Naive thymus-derived CD4-positive, alpha-beta T cell (primary cell): ENCODE measurements at regions of chr4 and their contacts with region 1.

Region 1: DNA sequence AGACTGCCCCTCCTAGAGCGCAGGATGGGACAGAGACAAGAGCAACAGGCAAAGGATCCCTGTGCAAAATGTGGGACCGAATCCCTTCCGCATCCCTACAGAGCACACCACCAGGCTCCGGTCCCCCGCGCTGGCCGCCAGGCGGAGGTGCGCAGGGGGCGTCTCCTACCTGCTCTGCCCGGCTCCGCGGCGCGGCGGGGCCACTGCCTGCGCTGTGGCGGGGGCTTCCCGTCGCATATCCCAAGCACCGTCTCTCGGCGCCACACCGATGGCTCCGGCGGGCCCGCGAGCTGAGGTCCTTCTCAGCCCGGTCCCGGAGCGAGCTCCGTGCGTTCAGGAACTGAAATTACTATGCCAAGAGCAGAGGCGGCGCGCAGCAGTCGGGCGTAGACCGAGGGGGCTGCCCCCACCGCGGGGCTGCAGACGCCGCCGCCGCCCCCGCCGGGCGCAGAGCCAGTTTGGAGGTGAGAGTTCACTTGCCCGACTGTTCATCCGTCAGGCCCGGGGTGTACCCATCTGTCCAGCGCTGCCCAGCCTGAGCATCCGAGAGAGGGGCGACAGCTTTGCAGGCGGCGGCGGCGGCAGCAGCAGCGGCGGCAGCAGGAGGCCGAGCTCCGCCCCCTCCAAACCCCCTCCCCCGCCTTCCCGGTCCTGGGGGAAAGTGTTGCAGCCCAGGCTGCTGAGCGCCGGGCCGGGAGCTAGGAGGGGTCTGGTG is at the start of gene GPRIN3:
- DNase-seq: peak; percentile 54 to 80 (median 66)
- ATAC-seq: peak; percentile 79
- H3K4me3 ChIP-seq: peak within 1 kb of the TSS; percentile 93
- H3K4me3 Mint-ChIP-seq: peak within 1 kb of the TSS; percentile 80 to 99 (median 94)
- H3K27ac ChIP-seq: peak within 1 kb of the TSS; percentile 81
- H3K27ac Mint-ChIP-seq: peak within 1 kb of the TSS; percentile 83 to 98 (median 90)
- H3K4me1 ChIP-seq: peaks cover 18 to 20% of the 10 kb centered on the region in 2 donors
- H3K4me1 Mint-ChIP-seq: peaks cover 39 to 70% (median 64%) of the 10 kb centered on the region in 7 donors
- H3K27me3 ChIP-seq: no peaks in the 10 kb centered on the region
- H3K27me3 Mint-ChIP-seq: no peaks in the 10 kb centered on the region
- total RNA-seq, gene GPRIN3: 10.2 to 55.5 (median 24.8) TPM

Region 2: DNA sequence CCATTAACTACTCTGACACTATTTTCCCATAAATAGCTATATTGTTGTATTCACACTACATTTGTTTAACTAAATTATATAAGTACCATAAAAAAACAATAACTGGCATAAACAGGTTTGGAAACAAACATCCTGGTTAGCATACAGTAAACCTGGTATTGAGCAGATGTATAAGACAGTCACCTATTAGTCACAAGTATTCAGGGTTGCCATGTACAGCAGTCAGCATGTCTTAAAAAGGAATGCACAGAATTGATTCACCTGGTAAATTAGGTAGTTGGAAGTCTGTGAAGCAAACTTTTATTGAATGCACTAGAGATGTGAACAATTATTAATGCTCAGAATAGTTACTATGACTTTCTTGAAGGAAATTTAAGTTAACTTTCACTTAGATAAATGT is 388.5 kb before region 1 on chr4:
- CTCF ChIA-PET with region 1: no interaction called
- POLR2A ChIA-PET with region 1: no interaction called
- intact Hi-C with region 1: no loop called
- DNase-seq: no peak
- ATAC-seq: no peak
- H3K4me3 ChIP-seq: no peak overlapping the region
- H3K4me3 Mint-ChIP-seq: no peak overlapping the region
- H3K27ac ChIP-seq: no peak overlapping the region
- H3K27ac Mint-ChIP-seq: no peak overlapping the region
- H3K4me1 ChIP-seq: no peaks in the 10 kb centered on the region
- H3K4me1 Mint-ChIP-seq: no peaks in the 10 kb centered on the region
- H3K27me3 ChIP-seq: no peaks in the 10 kb centered on the region
- H3K27me3 Mint-ChIP-seq: peaks cover 0 to 3% (median 0%) of the 10 kb centered on the region in 5 donors

Region 3: DNA sequence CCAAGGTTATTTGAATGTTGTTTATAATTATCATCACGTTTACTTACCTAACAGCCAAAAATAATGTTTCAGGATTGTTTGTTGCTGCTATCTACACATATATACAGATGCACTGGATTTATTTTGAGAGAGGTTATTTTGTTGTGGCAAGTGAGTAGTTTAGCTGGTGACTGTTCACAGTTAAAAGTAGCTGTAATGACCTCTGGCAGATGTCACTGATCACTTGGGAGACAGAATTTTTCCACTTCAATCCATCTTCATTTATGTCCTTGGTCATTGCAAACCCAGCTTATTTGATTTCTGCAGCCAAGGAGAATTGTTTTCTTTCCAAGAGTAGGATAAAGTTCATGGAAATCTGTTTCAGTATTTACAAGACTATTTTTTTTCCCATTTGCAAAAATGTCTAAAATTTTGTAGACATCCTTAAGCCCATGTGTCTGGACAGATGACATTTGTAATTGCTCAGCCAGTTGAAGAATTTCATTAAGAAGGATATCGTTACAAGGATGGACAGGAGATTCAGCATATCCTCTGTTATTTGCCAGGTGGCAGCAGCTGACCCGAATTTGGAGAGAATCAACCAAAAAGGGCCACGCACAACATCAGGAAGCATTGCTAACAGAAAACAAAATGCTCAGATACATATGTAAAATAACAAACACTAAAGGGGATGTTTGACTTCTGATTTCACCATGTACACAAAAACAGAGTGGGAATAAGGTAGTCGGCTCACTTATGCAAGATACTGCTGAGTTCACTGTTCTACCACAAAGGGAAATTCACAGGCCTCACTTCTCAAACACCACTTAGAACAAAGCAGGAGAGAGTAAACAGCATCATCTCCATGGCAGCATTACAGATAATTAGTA is 64.5 kb before region 1 on chr4:
- CTCF ChIA-PET with region 1: no interaction called
- POLR2A ChIA-PET with region 1: no interaction called
- intact Hi-C with region 1: loop called in 1 of 2 experiments (anchors 2 kb)
- DNase-seq: peak in 7 of 9 donors; percentile 16 to 67 (median 35)
- ATAC-seq: peak; percentile 96
- H3K4me3 ChIP-seq: no peak overlapping the region
- H3K4me3 Mint-ChIP-seq: peak overlapping the region in 5 of 10 donors; percentile 9 to 73 (median 20)
- H3K27ac ChIP-seq: peak overlapping the region; percentile 39
- H3K27ac Mint-ChIP-seq: peak overlapping the region; percentile 44 to 94 (median 80)
- H3K4me1 ChIP-seq: peaks cover 13 to 40% of the 10 kb centered on the region in 2 donors
- H3K4me1 Mint-ChIP-seq: peaks cover 15 to 62% (median 46%) of the 10 kb centered on the region in 7 donors
- H3K27me3 ChIP-seq: no peaks in the 10 kb centered on the region
- H3K27me3 Mint-ChIP-seq: no peaks in the 10 kb centered on the region

Region 4: DNA sequence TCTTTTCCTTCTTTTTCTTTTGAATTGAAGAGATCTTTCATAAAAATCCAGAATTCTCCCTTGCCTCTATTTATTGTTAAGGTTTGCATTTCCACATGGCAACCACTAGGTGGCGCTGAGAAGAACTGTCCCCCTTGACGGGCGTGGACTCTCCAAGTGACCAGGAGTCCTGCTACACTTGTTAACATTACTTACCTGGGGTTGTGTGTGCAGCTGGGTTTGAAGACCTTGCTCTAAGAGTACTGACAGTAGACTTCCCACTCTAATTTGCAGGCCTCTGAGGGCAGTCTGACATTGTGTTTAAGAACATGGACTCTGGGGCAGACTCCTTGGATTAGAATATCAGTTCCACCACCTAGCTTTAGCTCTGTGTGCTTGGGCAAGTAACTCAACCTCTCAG is 52.8 kb before region 1 on chr4:
- CTCF ChIA-PET with region 1: interaction called, 9 read pairs
- POLR2A ChIA-PET with region 1: interaction called, 5 read pairs
- intact Hi-C with region 1: loop called (anchors 1 to 2 kb)
- DNase-seq: peak; percentile 23 to 51 (median 35)
- ATAC-seq: peak; percentile 85
- H3K4me3 ChIP-seq: no peak overlapping the region
- H3K4me3 Mint-ChIP-seq: peak overlapping the region in 3 of 10 donors; percentile 3 to 25 (median 6)
- H3K27ac ChIP-seq: no peak overlapping the region
- H3K27ac Mint-ChIP-seq: peak overlapping the region; percentile 15 to 85 (median 66)
- H3K4me1 ChIP-seq: peaks cover 15 to 16% of the 10 kb centered on the region in 2 donors
- H3K4me1 Mint-ChIP-seq: peaks cover 44 to 86% (median 74%) of the 10 kb centered on the region in 7 donors
- H3K27me3 ChIP-seq: no peaks in the 10 kb centered on the region
- H3K27me3 Mint-ChIP-seq: no peaks in the 10 kb centered on the region

Region 5: GRCh38 chr4:89336818-89337420 is 29.3 kb after region 1 on chr4:
- CTCF ChIA-PET with region 1: no interaction called
- POLR2A ChIA-PET with region 1: interaction called, 7 read pairs
- intact Hi-C with region 1: loop called in 1 of 2 experiments (anchors 2 kb)
- DNase-seq: no peak
- ATAC-seq: no peak
- H3K4me3 ChIP-seq: no peak overlapping the region
- H3K4me3 Mint-ChIP-seq: peak overlapping the region in 5 of 10 donors; percentile 2 to 74 (median 9)
- H3K27ac ChIP-seq: no peak overlapping the region
- H3K27ac Mint-ChIP-seq: peak overlapping the region in 3 of 9 donors; percentile 5 to 70 (median 11)
- H3K4me1 ChIP-seq: peaks cover 0 to 19% of the 10 kb centered on the region in 2 donors
- H3K4me1 Mint-ChIP-seq: peaks cover 0 to 16% (median 9%) of the 10 kb centered on the region in 7 donors
- H3K27me3 ChIP-seq: no peaks in the 10 kb centered on the region
- H3K27me3 Mint-ChIP-seq: no peaks in the 10 kb centered on the region

Region 6: DNA sequence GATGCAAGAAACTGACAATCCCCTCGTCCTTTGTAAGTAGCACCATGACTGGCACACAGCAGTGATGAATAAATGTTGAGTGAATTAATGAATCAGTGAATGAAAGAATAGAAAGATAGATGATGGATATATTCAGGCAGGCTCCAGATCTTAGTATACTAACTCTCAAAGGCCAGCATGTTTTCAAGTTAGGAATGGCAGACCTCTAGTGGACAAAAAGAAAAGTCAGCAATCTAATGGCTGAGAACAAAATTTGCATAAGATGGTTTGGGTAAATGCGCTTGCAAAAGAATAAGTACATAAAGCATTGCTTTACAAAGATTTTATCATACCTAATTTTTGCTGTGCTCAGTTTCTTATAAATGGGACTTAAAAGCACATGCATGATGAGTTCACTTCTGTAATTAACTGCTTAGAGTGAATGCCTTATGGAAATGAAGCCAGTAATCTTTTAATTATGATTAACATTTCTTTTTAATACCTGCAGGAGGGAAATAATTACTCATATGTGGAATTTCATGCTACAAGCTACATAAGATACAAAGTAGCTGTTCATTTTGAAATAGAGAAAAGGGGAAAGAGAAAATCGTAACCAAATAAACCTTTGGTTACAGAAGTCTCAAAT is 126.9 kb after region 1 on chr4:
- CTCF ChIA-PET with region 1: no interaction called
- POLR2A ChIA-PET with region 1: no interaction called
- intact Hi-C with region 1: loop called in 1 of 2 experiments (anchors 1 kb)
- DNase-seq: peak in 6 of 9 donors; percentile 28 to 61 (median 45)
- ATAC-seq: peak; percentile 72
- H3K4me3 ChIP-seq: no peak overlapping the region
- H3K4me3 Mint-ChIP-seq: no peak overlapping the region
- H3K27ac ChIP-seq: no peak overlapping the region
- H3K27ac Mint-ChIP-seq: peak overlapping the region in 1 of 9 donors; percentile 14
- H3K4me1 ChIP-seq: no peaks in the 10 kb centered on the region
- H3K4me1 Mint-ChIP-seq: peaks cover 8 to 23% (median 13%) of the 10 kb centered on the region in 7 donors
- H3K27me3 ChIP-seq: no peaks in the 10 kb centered on the region
- H3K27me3 Mint-ChIP-seq: no peaks in the 10 kb centered on the region

Region 7: GRCh38 chr4:89469930-89470375 is 162.3 kb after region 1 on chr4:
- CTCF ChIA-PET with region 1: no interaction called
- POLR2A ChIA-PET with region 1: no interaction called
- intact Hi-C with region 1: loop called in 1 of 2 experiments (anchors 5 kb)
- DNase-seq: peak in 7 of 9 donors; percentile 18 to 61 (median 47)
- ATAC-seq: peak; percentile 76
- H3K4me3 ChIP-seq: no peak overlapping the region
- H3K4me3 Mint-ChIP-seq: peak overlapping the region in 9 of 10 donors; percentile 13 to 74 (median 62)
- H3K27ac ChIP-seq: no peak overlapping the region
- H3K27ac Mint-ChIP-seq: peak overlapping the region; percentile 7 to 82 (median 58)
- H3K4me1 ChIP-seq: peaks cover 0 to 7% of the 10 kb centered on the region in 2 donors
- H3K4me1 Mint-ChIP-seq: peaks cover 11 to 28% (median 23%) of the 10 kb centered on the region in 7 donors
- H3K27me3 ChIP-seq: no peaks in the 10 kb centered on the region
- H3K27me3 Mint-ChIP-seq: no peaks in the 10 kb centered on the region

Region 8: DNA sequence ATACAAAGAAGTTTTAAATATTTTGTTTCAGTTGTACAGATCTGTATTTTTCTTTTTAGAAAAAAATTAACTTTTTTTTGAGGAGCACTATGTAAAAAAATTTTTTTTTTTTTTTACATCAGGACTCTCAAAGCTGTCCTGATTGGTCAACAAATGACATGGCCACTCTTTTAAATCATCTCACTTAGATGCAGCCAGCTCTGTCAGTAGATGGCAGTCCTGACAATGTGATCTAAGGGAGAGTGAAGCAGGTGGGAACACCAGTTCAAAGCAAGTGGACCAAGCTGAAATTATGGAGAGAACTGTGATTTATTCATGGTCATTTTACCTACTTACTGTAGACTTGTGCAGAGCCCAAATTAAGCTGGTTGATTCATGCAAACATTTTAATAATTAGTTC is 174.6 kb after region 1 on chr4:
- CTCF ChIA-PET with region 1: no interaction called
- POLR2A ChIA-PET with region 1: no interaction called
- intact Hi-C with region 1: no loop called
- DNase-seq: no peak
- ATAC-seq: no peak
- H3K4me3 ChIP-seq: no peak overlapping the region
- H3K4me3 Mint-ChIP-seq: no peak overlapping the region
- H3K27ac ChIP-seq: no peak overlapping the region
- H3K27ac Mint-ChIP-seq: no peak overlapping the region
- H3K4me1 ChIP-seq: no peaks in the 10 kb centered on the region
- H3K4me1 Mint-ChIP-seq: no peaks in the 10 kb centered on the region
- H3K27me3 ChIP-seq: no peaks in the 10 kb centered on the region
- H3K27me3 Mint-ChIP-seq: peaks cover 0 to 17% (median 0%) of the 10 kb centered on the region in 5 donors